A673 (cell line): ENCODE measurements at regions of chr2 and their contacts with region 1.

Region 1: GRCh38 chr2:74833418-74834233 is at the start of gene HK2:
- DNase-seq: peak; percentile 96
- H3K4me3 ChIP-seq: peak within 1 kb of the TSS; percentile 87
- H3K27ac ChIP-seq: peak within 1 kb of the TSS; percentile 90
- H3K4me1 ChIP-seq: peaks cover 16% of the 10 kb centered on the region
- H3K27me3 ChIP-seq: no peaks in the 10 kb centered on the region
- CTCF ChIP-seq: no peak
- total RNA-seq, gene HK2: 40.1 and 42.6 TPM in 2 replicates

Region 2: GRCh38 chr2:73582364-73582763 is 1251.3 kb before region 1 on chr2:
- CTCF ChIA-PET with region 1: no interaction called
- POLR2A ChIA-PET with region 1: no interaction called
- intact Hi-C with region 1: no loop called
- DNase-seq: no peak
- H3K4me3 ChIP-seq: no peak overlapping the region
- H3K27ac ChIP-seq: no peak overlapping the region
- H3K4me1 ChIP-seq: no peaks in the 10 kb centered on the region
- H3K27me3 ChIP-seq: no peaks in the 10 kb centered on the region
- CTCF ChIP-seq: no peak

Region 3: DNA sequence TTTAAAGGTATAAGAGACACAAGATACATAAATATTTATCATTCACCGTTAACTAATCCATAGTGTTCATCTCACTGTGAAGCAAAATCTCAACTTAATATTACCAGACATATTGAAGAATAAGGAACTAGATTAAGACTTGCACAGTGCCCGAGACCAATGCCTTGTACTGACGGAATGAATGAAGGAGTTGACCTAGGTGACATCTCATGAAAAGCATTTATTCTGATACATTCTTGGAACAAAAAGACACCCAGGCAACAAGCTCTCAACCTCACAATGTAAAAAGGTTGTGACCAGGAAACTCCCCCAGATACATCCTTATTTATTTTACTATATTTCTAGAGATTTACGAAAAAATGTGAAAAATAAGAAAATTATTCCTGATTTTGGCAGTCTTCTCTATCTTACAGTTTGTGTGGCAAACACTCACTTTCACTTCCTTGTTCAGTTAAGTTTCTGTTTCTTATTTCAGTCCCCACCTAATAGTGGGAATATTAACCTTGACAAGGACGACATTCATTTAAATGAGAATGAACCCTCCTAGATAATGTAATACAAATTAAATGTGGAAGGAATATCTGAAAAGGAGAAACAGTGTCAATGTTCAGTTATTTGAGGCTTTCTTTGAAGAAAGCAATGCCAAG is 213.9 kb before region 1 on chr2:
- CTCF ChIA-PET with region 1: interaction called, 10 read pairs
- POLR2A ChIA-PET with region 1: no interaction called
- intact Hi-C with region 1: no loop called
- DNase-seq: no peak
- H3K4me3 ChIP-seq: no peak overlapping the region
- H3K27ac ChIP-seq: no peak overlapping the region
- H3K4me1 ChIP-seq: no peaks in the 10 kb centered on the region
- H3K27me3 ChIP-seq: peaks cover 5% of the 10 kb centered on the region
- CTCF ChIP-seq: no peak

Region 4: GRCh38 chr2:74715078-74715791 is 118.4 kb before region 1 on chr2:
- CTCF ChIA-PET with region 1: interaction called, 4 read pairs
- POLR2A ChIA-PET with region 1: no interaction called
- intact Hi-C with region 1: loop called (anchors 2 kb)
- DNase-seq: peak; percentile 84
- H3K4me3 ChIP-seq: peak overlapping the region; percentile 48
- H3K27ac ChIP-seq: no peak overlapping the region
- H3K4me1 ChIP-seq: peaks cover 3% of the 10 kb centered on the region
- H3K27me3 ChIP-seq: peaks cover 28% of the 10 kb centered on the region
- CTCF ChIP-seq: peak; percentile 95

Region 5: GRCh38 chr2:74876081-74876886 is 42.7 kb after region 1 on chr2:
- CTCF ChIA-PET with region 1: interaction called, 10 read pairs
- POLR2A ChIA-PET with region 1: no interaction called
- intact Hi-C with region 1: loop called (anchors 5 kb)
- DNase-seq: peak; percentile 71
- H3K4me3 ChIP-seq: no peak overlapping the region
- H3K27ac ChIP-seq: no peak overlapping the region
- H3K4me1 ChIP-seq: no peaks in the 10 kb centered on the region
- H3K27me3 ChIP-seq: no peaks in the 10 kb centered on the region
- CTCF ChIP-seq: peak; percentile 77